Sigmoid colon (tissue), 7 donors: ENCODE measurements at regions of chr12 and their contacts with region 1.

Region 1: DNA sequence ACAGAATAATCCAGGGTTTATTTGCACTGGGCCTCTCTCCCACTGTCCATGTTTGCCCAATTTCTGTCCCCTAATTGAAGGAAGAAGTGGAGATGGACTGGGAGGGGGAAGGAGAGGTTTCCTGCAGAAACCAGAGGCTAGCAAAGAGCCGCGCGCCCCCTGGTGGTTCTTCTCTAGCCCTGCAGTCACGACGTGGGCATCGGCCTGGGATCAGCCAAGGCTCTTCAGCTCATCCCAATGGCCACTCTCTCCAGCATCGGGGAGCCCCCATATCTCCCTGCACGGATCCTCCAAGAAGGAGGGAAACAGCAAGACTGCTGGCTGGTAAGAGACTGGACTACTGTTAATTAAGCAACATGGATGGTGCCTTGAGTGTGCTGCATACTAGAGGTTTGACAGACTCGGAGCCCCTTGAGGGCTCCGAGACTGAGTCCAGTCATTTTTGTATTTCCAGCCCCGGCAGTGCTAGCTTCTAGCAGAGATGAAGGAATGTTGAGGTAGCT is 18.7 kb downstream of the ZBTB39 start:
- DNase-seq: peak; percentile 92
- H3K4me3 ChIP-seq: no peak overlapping the region
- H3K27ac ChIP-seq: no peak overlapping the region
- H3K4me1 ChIP-seq: peaks cover 0 to 10% (median 4%) of the 10 kb centered on the region in 4 donors
- H3K27me3 ChIP-seq: no peaks in the 10 kb centered on the region
- CTCF ChIP-seq: peak; percentile 91 to 98 (median 93)
- EP300 ChIP-seq: no peak
- POLR2A ChIP-seq: no peak

Region 2: GRCh38 chr12:56230432-56231183 is 757.0 kb before region 1 on chr12:
- intact Hi-C with region 1: no loop called
- DNase-seq: no peak
- H3K4me3 ChIP-seq: no peak overlapping the region
- H3K27ac ChIP-seq: no peak overlapping the region
- H3K4me1 ChIP-seq: no peaks in the 10 kb centered on the region
- H3K27me3 ChIP-seq: no peaks in the 10 kb centered on the region
- CTCF ChIP-seq: no peak
- EP300 ChIP-seq: no peak
- POLR2A ChIP-seq: no peak

Region 3: GRCh38 chr12:56751712-56752598 is 235.6 kb before region 1 on chr12 and contains the start of gene PRIM1:
- intact Hi-C with region 1: loop called (anchors 1 kb)
- DNase-seq: peak; percentile 90
- H3K4me3 ChIP-seq: peak within 1 kb of the TSS; percentile 66 to 84 (median 74)
- H3K27ac ChIP-seq: peak within 1 kb of the TSS; percentile 73 to 80 (median 76)
- H3K4me1 ChIP-seq: peaks cover 0 to 10% (median 7%) of the 10 kb centered on the region in 4 donors
- H3K27me3 ChIP-seq: no peaks in the 10 kb centered on the region
- CTCF ChIP-seq: peak in 1 of 4 experiments; percentile 37
- EP300 ChIP-seq: no peak
- POLR2A ChIP-seq: no peak
- total RNA-seq, gene PRIM1: 3.9 to 7.5 (median 6.5) TPM